Right ventricle myocardium superior (tissue), 1 donor: ENCODE measurements at regions of chr18 and their contacts with region 1.

Region 1: DNA sequence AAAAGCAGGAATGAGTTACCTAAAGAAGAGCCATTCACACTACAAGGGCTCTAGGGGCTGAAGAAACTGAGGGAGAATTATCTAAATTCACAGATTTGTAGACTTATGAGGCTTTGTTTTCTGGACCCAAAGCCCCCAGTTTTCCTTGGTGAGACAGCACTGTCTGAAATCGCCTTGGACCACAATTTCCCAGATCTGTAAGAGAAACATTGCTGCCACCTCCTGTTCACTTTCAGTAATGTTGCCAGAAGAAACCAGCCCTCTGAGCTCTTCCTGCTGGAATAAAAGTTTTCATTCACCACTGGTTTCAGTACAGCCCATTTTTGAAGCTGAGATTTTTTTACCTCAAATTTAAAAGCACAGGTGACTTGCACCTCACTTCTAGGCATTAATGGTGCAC is 169.2 kb downstream of the CDH20 start:
- DNase-seq: no peak
- ATAC-seq: peak; percentile 64

Region 2: DNA sequence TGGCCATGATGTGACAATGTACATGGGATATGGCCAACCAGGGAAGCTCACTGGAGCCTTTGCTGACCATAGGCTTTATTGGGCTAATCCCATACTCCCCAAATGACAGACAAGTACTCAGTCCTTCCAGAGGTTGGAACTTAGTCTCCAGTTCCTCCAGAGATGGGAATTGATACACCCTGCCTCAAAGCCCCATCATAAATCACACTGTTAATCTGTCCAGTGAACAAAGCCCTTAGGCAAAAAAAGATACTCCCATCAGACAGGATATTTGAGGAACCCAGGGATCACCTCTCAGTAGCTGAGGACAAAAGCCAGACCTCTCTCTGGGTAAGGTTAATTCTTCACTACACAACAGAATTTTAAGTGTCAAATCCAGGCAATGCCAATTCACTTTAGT is 416.7 kb before region 1 on chr18:
- intact Hi-C with region 1: loop called (anchors 10 kb)
- DNase-seq: no peak
- ATAC-seq: no peak

Region 3: GRCh38 chr18:61322265-61322873 is 180.1 kb before region 1 on chr18:
- intact Hi-C with region 1: loop called (anchors 5 kb)
- DNase-seq: peak; percentile 53
- ATAC-seq: peak; percentile 73

Region 4: GRCh38 chr18:62663731-62664336 is 1161.4 kb after region 1 on chr18:
- intact Hi-C with region 1: no loop called
- DNase-seq: no peak
- ATAC-seq: peak; percentile 71